Sigmoid colon (tissue), 7 donors: ENCODE measurements at regions of chr6 and their contacts with region 1.

Region 1: GRCh38 chr6:139375232-139376016 is 976 bp upstream of the CITED2 start:
- DNase-seq: peak; percentile 98
- H3K4me3 ChIP-seq: peak overlapping the region; percentile 65 to 89 (median 86)
- H3K27ac ChIP-seq: peak overlapping the region; percentile 96 to 97 (median 97)
- H3K4me1 ChIP-seq: peaks cover 4 to 26% (median 12%) of the 10 kb centered on the region in 4 donors
- H3K27me3 ChIP-seq: no peaks in the 10 kb centered on the region
- CTCF ChIP-seq: no peak
- EP300 ChIP-seq: peak in 3 of 4 donors; percentile 48 to 82 (median 66)
- POLR2A ChIP-seq: peak in 1 of 2 donors; percentile 49

Region 2: GRCh38 chr6:139533573-139534471 is 158.4 kb after region 1 on chr6:
- intact Hi-C with region 1: loop called (anchors 5 kb)
- DNase-seq: no peak
- H3K4me3 ChIP-seq: no peak overlapping the region
- H3K27ac ChIP-seq: peak overlapping the region; percentile 40 to 68 (median 52)
- H3K4me1 ChIP-seq: peaks cover 0 to 38% (median 30%) of the 10 kb centered on the region in 4 donors
- H3K27me3 ChIP-seq: no peaks in the 10 kb centered on the region
- CTCF ChIP-seq: no peak
- EP300 ChIP-seq: no peak
- POLR2A ChIP-seq: peak in 1 of 2 donors; percentile 15

Region 3: GRCh38 chr6:139708337-139709199 is 333.1 kb after region 1 on chr6:
- intact Hi-C with region 1: loop called (anchors 5 kb)
- DNase-seq: no peak
- H3K4me3 ChIP-seq: no peak overlapping the region
- H3K27ac ChIP-seq: peak overlapping the region in 3 of 4 donors; percentile 33 to 54 (median 48)
- H3K4me1 ChIP-seq: peaks cover 0 to 39% (median 33%) of the 10 kb centered on the region in 4 donors
- H3K27me3 ChIP-seq: no peaks in the 10 kb centered on the region
- CTCF ChIP-seq: no peak
- EP300 ChIP-seq: no peak
- POLR2A ChIP-seq: no peak

Region 4: DNA sequence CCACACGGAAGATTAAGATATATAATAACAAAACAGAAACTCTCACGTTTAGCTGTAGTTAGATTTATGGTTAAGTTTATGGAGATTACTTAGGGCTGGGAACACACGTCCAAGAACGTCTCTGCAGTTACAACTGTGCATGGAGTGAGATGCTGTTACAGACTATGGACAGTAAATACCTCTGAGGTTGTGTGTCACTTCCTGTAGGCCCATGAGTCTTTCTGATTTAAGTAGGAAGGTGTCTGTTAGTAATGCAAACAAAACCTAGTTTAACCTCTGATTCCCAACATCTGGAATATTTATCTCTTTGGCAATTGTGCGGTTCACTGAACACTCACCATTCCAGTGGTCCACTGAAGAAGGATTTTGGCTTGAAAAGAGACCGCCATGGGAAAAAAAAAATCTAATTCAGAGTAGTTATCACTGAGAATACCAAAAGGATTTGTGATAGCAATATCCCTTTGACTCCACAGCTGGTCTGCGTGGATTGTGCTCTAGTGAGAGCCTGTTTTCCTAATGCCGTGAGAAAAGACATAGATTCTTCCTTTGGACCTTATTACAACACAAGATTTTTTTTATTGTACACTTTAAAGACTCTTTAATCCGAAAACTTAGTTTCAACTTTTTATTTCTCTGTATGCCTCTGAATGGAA is 477.2 kb after region 1 on chr6:
- intact Hi-C with region 1: loop called (anchors 5 kb)
- DNase-seq: no peak
- H3K4me3 ChIP-seq: no peak overlapping the region
- H3K27ac ChIP-seq: peak overlapping the region in 3 of 4 donors; percentile 57 to 72 (median 69)
- H3K4me1 ChIP-seq: peaks cover 0 to 60% (median 47%) of the 10 kb centered on the region in 4 donors
- H3K27me3 ChIP-seq: no peaks in the 10 kb centered on the region
- CTCF ChIP-seq: no peak
- EP300 ChIP-seq: no peak
- POLR2A ChIP-seq: no peak

Region 5: DNA sequence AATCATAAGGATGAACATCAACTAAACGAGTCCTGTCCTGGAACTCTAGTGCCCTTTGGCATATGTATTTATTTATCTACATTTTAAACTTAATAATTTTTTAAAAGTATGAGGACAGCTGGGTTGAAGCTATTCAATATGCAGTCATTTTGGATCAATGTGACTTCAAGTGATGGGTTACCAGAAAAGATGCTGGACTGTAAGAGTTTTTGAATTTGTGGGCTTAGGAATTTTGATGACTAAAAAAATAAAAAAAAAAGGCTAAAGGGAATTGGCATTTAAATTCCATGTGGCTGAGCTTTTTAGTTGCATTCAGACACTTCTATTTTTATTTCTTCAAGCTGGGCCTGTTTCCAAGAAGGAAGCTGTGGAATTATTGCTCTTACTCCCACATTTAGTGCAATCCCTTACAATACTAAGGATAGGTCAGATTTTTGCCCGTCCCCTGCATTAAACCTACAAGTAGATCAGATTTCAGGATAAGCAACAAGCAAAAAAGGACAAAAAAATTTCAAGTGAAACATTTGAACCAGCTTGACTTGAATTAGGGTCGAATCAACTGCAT is 703.2 kb after region 1 on chr6:
- intact Hi-C with region 1: loop called (anchors 10 kb)
- DNase-seq: no peak
- H3K4me3 ChIP-seq: no peak overlapping the region
- H3K27ac ChIP-seq: peak overlapping the region; percentile 37 to 69 (median 51)
- H3K4me1 ChIP-seq: peaks cover 0 to 43% (median 32%) of the 10 kb centered on the region in 4 donors
- H3K27me3 ChIP-seq: no peaks in the 10 kb centered on the region
- CTCF ChIP-seq: no peak
- EP300 ChIP-seq: no peak
- POLR2A ChIP-seq: no peak